Mammary epithelial cell (primary cell): ENCODE measurements at regions of chr1 and their contacts with region 1.

Region 1: GRCh38 chr1:916173-917075 is 7.3 kb upstream of the SAMD11 start:
- DNase-seq: no peak
- H3K4me3 ChIP-seq: no peak overlapping the region
- H3K27ac ChIP-seq: no peak overlapping the region
- H3K4me1 ChIP-seq: peaks cover 12% of the 10 kb centered on the region
- H3K27me3 ChIP-seq: peaks cover 27% of the 10 kb centered on the region
- CTCF ChIP-seq: no peak

Region 2: DNA sequence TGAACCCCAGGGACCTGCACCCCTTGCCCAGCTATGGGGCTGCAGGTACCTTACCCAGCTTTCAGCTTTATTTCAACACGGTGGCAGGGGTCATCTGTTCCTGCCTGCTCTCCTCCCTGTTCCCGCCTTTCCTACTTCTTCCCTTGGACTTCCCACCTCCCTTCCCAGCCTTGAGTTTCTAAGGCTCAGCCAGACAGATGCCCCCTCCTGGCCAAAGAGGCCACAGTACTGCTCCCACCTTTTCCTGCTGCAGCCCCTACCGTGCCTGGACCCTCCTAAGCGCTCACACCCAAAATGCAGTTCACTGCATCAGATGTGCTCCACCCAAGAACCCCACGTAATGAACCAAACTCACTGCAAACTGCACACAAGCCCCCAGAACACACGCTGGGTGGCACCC is 34.9 kb after region 1 on chr1:
- CTCF ChIA-PET with region 1: no interaction called
- dilution Hi-C with region 1: loop called (anchors 5 kb)
- in situ Hi-C with region 1: no loop called
- intact Hi-C with region 1: no loop called
- DNase-seq: no peak
- H3K4me3 ChIP-seq: no peak overlapping the region
- H3K27ac ChIP-seq: no peak overlapping the region
- H3K4me1 ChIP-seq: no peaks in the 10 kb centered on the region
- H3K27me3 ChIP-seq: no peaks in the 10 kb centered on the region
- CTCF ChIP-seq: peak; percentile 14 to 21

Region 3: GRCh38 chr1:1206376-1207260 is 290.2 kb after region 1 on chr1 and contains the start of gene TNFRSF18:
- CTCF ChIA-PET with region 1: no interaction called
- dilution Hi-C with region 1: no loop called
- in situ Hi-C with region 1: no loop called
- intact Hi-C with region 1: loop called (anchors 5 kb)
- DNase-seq: no peak
- H3K4me3 ChIP-seq: no peak within 1 kb of the TSS
- H3K27ac ChIP-seq: no peak within 1 kb of the TSS
- H3K4me1 ChIP-seq: peaks cover 21% of the 10 kb centered on the region
- H3K27me3 ChIP-seq: peaks cover 2% of the 10 kb centered on the region
- CTCF ChIP-seq: no peak
- total RNA-seq, gene TNFRSF18: 0.67 TPM in 1 of 2 donors, not detected in the other